ENCODE measurements at regions of chr1 and their contacts with region 1.

Region 1: DNA sequence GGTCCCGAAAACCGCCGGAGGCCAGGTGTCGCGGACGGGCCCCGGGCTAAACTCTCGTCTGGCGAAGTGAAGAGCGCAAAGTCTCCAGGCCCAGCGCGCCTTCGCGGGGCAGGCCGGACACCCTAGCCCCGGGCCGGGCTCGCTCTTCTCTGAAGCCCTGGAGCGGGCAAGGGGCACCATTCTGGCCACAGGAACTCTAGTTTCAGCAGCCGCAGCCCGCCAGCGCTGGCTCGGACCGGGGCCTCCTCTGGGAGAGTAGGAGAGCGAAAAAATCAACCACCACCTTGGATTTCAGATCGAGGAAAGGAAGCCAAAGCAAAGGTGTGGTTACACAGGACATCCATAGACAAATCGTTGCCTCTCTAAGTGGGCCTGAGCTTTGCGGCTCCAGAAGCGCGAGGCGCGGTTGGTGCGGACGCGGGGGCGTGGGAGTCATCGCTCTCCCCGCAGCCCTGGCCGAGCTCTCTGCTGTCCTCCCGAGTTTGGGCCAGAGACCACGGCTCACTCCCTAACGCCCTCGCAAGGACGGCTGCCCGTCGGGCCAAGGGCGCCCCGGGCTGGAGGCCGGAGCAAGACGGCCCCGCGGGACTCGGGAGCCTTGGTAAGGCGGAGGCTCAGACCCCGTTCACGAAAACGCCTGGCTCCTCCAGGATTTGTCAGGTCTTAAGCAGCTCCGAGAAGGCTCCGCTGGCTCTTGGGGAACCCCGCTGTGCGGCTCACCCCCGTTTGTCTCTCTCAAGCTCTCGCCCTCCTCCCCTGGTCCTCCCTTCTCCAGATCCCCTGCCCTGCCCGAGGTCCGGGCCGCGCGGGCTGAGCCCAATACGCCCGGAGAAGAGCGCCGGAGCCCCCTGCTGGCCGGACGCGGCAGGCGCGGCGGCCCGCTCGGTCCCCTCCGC is 132.9 kb upstream of the DPYD start:
- DNase-seq: peak; percentile 37 to 71 (median 60)
- H3K4me3 ChIP-seq: peak overlapping the region in 2 of 4 donors; percentile 29 to 50
- H3K27ac ChIP-seq: peak overlapping the region in 1 of 5 donors; percentile 14
- H3K4me1 ChIP-seq: peaks cover 5 to 6% of the 10 kb centered on the region in 2 donors
- H3K27me3 ChIP-seq: peaks cover 44% of the 10 kb centered on the region
- CTCF ChIP-seq: peak; percentile 47 to 95 (median 68)
- POLR2A ChIP-seq: no peak

Region 2: DNA sequence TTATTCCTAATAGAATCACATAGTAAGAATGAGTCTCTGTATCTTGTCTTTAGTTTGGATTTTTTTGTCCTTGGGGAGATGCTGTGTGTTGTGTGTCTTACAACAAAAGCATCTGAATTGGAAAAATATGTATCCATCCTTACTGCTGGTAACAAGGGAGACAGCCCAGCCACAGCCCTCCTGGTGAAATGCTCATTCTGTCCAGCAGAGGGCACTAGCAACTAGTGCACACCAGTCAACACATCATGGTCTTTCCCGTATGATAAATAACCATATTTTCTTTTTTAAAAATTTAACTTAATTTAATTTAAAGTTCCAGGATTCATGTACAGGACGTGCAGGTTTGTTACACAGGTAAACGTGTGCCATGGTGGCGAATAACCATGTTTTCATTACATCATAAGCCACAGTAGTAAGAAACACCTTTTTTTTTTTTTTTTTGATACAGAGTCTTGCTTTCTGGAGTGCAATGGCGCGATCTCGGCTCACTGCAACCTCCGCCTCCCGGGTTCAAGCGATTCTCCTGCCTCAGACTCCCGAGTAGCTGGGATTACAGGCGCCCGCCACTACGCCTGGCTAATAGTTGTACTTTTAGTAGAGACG is 1087.1 kb before region 1 on chr1:
- intact Hi-C with region 1: loop called in 1 of 2 experiments (anchors 5 kb)
- DNase-seq: peak; percentile 58 to 94 (median 76)
- H3K4me3 ChIP-seq: no peak overlapping the region
- H3K27ac ChIP-seq: no peak overlapping the region
- H3K4me1 ChIP-seq: peaks cover 0 to 5% of the 10 kb centered on the region in 2 donors
- H3K27me3 ChIP-seq: no peaks in the 10 kb centered on the region
- CTCF ChIP-seq: peak; percentile 72 to 95 (median 82)
- POLR2A ChIP-seq: no peak

Region 3: DNA sequence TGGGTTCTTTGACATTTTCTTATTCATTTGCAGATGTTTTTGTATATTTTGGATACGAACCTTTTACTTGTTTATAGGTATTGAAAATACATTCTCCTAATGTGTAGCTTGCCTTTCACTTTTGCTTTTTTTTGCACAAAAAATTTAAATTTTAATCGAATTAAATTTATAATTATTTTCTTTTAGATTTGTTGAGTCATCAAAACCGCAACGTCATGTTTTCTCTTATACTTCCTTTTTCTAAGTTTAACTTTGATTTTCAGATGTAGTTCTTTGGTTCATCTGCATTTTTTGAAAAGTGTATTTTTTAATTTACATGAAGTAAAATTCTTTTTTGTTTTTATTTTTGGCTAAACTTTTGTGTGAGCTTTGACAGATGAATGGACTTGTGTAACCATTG is 110.8 kb after region 1 on chr1:
- intact Hi-C with region 1: no loop called
- DNase-seq: no peak
- H3K4me3 ChIP-seq: no peak overlapping the region
- H3K27ac ChIP-seq: no peak overlapping the region
- H3K4me1 ChIP-seq: no peaks in the 10 kb centered on the region
- H3K27me3 ChIP-seq: no peaks in the 10 kb centered on the region
- CTCF ChIP-seq: no peak
- POLR2A ChIP-seq: no peak

Region 4: GRCh38 chr1:99348397-99349132 is 1294.8 kb after region 1 on chr1:
- intact Hi-C with region 1: no loop called
- DNase-seq: no peak
- H3K4me3 ChIP-seq: no peak overlapping the region
- H3K27ac ChIP-seq: no peak overlapping the region
- H3K4me1 ChIP-seq: no peaks in the 10 kb centered on the region
- H3K27me3 ChIP-seq: no peaks in the 10 kb centered on the region
- CTCF ChIP-seq: no peak
- POLR2A ChIP-seq: no peak